ENCODE measurements at regions of chr7 and their contacts with region 1.

Region 1: DNA sequence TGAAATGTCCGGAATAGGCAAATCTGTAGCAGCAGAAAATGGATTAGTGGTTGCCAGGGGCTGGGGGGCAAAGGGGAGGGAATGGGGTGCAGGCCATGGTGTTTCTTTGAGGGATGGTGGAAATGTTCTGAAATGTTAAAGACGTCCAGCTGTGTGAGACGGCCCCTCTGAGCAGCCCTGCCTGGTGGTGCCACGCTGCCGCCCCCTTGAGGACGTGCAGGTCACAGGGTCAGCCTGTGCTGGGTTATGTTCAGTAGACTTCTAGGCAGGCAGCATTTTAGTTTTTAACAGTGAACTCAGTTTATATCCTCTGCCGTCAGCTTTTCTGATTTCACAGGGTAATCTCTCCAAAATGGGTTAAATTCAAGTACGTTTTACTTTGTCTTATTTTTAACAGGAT is 9.4 kb downstream of the NUB1 start:
- DNase-seq: no peak
- H3K4me3 ChIP-seq: no peak overlapping the region
- H3K27ac ChIP-seq: no peak overlapping the region
- H3K4me1 ChIP-seq: peaks cover 0 to 18% (median 2%) of the 10 kb centered on the region in 4 donors
- H3K27me3 ChIP-seq: no peaks in the 10 kb centered on the region
- CTCF ChIP-seq: no peak
- EP300 ChIP-seq: no peak
- POLR2A ChIP-seq: no peak

Region 2: DNA sequence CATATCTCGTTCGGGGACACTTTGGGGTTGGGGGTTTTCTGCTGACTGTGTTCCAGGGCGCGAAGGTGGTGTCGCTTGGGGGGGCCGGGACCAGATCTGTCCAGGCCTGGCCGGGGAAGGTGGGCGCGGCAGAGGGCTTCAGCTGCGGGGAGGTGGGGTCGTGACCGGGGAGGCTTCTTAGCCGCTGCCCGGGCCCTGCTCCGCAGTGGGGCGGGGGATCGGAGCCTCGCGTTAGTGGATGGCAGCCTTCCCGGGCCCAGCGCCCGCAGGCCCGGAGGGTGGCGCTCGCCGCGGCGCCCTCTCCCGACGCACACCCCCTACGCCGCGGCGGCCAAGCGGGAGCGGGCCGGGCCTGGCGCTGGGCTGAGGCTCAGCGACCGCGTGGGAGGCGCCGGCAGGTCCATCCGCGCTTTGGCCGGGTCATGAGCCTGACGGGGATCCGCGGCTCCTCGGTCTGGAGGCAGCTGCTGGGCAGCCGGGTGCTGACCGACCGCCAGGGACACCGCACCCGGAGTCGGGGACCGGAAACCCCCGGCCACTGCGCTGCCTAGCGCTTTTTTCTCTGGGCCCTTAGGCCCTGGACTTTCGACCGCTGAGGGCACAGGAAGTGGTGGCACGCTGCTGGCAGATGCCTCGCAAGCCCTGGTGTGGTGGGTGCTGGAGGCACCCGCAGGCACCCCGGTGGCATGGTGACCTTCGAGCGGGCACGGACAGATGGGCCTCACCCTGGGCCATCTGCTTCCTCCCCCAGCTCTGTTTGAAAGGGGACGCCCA is 263.6 kb before region 1 on chr7:
- intact Hi-C with region 1: no loop called
- DNase-seq: peak; percentile 84
- H3K4me3 ChIP-seq: peak overlapping the region; percentile 59 to 89 (median 74)
- H3K27ac ChIP-seq: peak overlapping the region; percentile 86 to 96 (median 88)
- H3K4me1 ChIP-seq: peaks cover 0 to 68% (median 63%) of the 10 kb centered on the region in 4 donors
- H3K27me3 ChIP-seq: no peaks in the 10 kb centered on the region
- CTCF ChIP-seq: peak in 2 of 4 experiments; percentile 2 to 13
- EP300 ChIP-seq: no peak
- POLR2A ChIP-seq: no peak

Region 3: GRCh38 chr7:151315038-151315655 is 35.9 kb before region 1 on chr7:
- intact Hi-C with region 1: loop called (anchors 1 kb)
- DNase-seq: peak; percentile 84
- H3K4me3 ChIP-seq: no peak overlapping the region
- H3K27ac ChIP-seq: no peak overlapping the region
- H3K4me1 ChIP-seq: peaks cover 0 to 14% (median 4%) of the 10 kb centered on the region in 4 donors
- H3K27me3 ChIP-seq: no peaks in the 10 kb centered on the region
- CTCF ChIP-seq: peak; percentile 41 to 87 (median 82)
- EP300 ChIP-seq: no peak
- POLR2A ChIP-seq: no peak

Region 4: GRCh38 chr7:151400626-151401315 is 49.7 kb after region 1 on chr7:
- intact Hi-C with region 1: no loop called
- DNase-seq: no peak
- H3K4me3 ChIP-seq: no peak overlapping the region
- H3K27ac ChIP-seq: no peak overlapping the region
- H3K4me1 ChIP-seq: no peaks in the 10 kb centered on the region
- H3K27me3 ChIP-seq: no peaks in the 10 kb centered on the region
- CTCF ChIP-seq: no peak
- EP300 ChIP-seq: no peak
- POLR2A ChIP-seq: no peak

Measured in sigmoid colon (tissue), 7 donors.